ENCODE measurements at regions of chr17 and their contacts with region 1.

Region 1: GRCh38 chr17:18038861-18039534 is at the starts of genes ATPAF2 and GID4:
- DNase-seq: peak; percentile 99 to 100
- ATAC-seq: peak; percentile 96 to 99 (median 98)
- H3K4me3 ChIP-seq: peak within 1 kb of the TSS; percentile 65 to 98 (median 86)
- H3K27ac ChIP-seq: peak within 1 kb of the TSS; percentile 12 to 89 (median 85)
- H3K4me1 ChIP-seq: peaks cover 9 to 60% (median 50%) of the 10 kb centered on the region in 9 donors
- H3K27me3 ChIP-seq: no peaks in the 10 kb centered on the region
- CTCF ChIP-seq: peak in 3 of 9 donors; percentile 10 to 28 (median 22)
- total RNA-seq, gene ATPAF2: 32.6 to 43.5 (median 37.4) TPM
- total RNA-seq, gene GID4: 14.6 to 23.7 (median 17.3) TPM

Region 2: GRCh38 chr17:17812211-17813057 is 226.6 kb before region 1 on chr17:
- intact Hi-C with region 1: loop called in 5 of 10 experiments (anchors 10 kb)
- DNase-seq: peak; percentile 77 to 82
- ATAC-seq: peak; percentile 11 to 65 (median 42)
- H3K4me3 ChIP-seq: no peak overlapping the region
- H3K27ac ChIP-seq: peak overlapping the region in 7 of 10 donors; percentile 8 to 56 (median 44)
- H3K4me1 ChIP-seq: peaks cover 14 to 91% (median 52%) of the 10 kb centered on the region in 9 donors
- H3K27me3 ChIP-seq: no peaks in the 10 kb centered on the region
- CTCF ChIP-seq: peak; percentile 99 to 100 (median 100)

Region 3: DNA sequence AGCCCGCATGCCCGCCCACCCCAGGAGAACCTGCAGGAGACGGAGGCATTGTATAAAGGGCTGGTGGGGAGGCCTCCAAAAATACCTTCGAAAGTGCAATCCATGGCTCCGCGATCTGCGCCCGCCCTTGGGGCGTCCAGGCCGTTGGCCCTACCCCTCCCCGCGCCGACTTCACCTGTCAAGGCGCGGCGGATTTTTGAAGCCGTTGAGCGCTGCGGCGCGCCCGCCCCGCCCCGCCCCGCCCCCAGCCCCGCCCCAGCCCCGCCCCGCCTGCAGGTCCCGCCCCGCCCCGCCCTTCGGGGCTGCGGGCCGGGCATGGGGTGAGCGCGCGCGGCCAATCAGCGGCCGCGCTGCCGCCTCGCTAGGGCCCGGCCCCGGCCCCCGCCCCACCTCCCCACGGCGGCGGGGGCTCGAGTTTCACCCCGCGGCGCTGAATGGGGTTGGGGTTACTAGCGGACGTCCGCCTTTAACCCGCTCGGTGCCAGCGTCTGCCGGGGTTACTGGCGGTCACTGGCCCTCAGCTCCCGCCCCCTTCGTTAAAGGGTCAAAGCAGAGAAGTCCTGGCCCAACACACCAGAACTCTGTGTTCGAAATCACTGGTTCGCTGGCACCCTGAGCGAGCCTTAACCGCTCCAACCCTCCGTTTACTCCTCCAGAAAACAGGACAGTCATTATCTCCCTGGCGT is 215.4 kb before region 1 on chr17:
- intact Hi-C with region 1: loop called in 7 of 10 experiments (anchors 10 kb)
- DNase-seq: peak; percentile 83 to 88
- ATAC-seq: peak; percentile 86 to 94 (median 90)
- H3K4me3 ChIP-seq: peak overlapping the region; percentile 1 to 67 (median 54)
- H3K27ac ChIP-seq: peak overlapping the region; percentile 57 to 92 (median 83)
- H3K4me1 ChIP-seq: peaks cover 29 to 78% (median 69%) of the 10 kb centered on the region in 9 donors
- H3K27me3 ChIP-seq: no peaks in the 10 kb centered on the region
- CTCF ChIP-seq: no peak

Region 4: GRCh38 chr17:17877529-17878358 is 161.3 kb before region 1 on chr17:
- intact Hi-C with region 1: loop called in 3 of 10 experiments (anchors 10 kb)
- DNase-seq: peak; percentile 81 to 88
- ATAC-seq: peak; percentile 79 to 90 (median 85)
- H3K4me3 ChIP-seq: peak overlapping the region in 3 of 10 donors; percentile 3 to 10 (median 5)
- H3K27ac ChIP-seq: peak overlapping the region; percentile 82 to 97 (median 90)
- H3K4me1 ChIP-seq: peaks cover 27 to 79% (median 54%) of the 10 kb centered on the region in 9 donors
- H3K27me3 ChIP-seq: no peaks in the 10 kb centered on the region
- CTCF ChIP-seq: peak in 4 of 9 donors; percentile 6 to 45 (median 28)

Region 5: GRCh38 chr17:17890773-17891759 is 147.9 kb before region 1 on chr17:
- intact Hi-C with region 1: loop called in 8 of 10 experiments (anchors 5 to 10 kb)
- DNase-seq: peak; percentile 38 to 42
- ATAC-seq: peak; percentile 49 to 76 (median 66)
- H3K4me3 ChIP-seq: no peak overlapping the region
- H3K27ac ChIP-seq: peak overlapping the region in 1 of 10 donors; percentile 12
- H3K4me1 ChIP-seq: peaks cover 4 to 43% (median 27%) of the 10 kb centered on the region in 9 donors
- H3K27me3 ChIP-seq: no peaks in the 10 kb centered on the region
- CTCF ChIP-seq: peak; percentile 36 to 75 (median 66)

Region 6: GRCh38 chr17:17994271-17995069 is 44.5 kb before region 1 on chr17:
- intact Hi-C with region 1: loop called in 4 of 10 experiments (anchors 5 kb)
- DNase-seq: peak; percentile 17 to 37
- ATAC-seq: peak; percentile 34 to 85 (median 78)
- H3K4me3 ChIP-seq: no peak overlapping the region
- H3K27ac ChIP-seq: no peak overlapping the region
- H3K4me1 ChIP-seq: peaks cover 0 to 9% (median 0%) of the 10 kb centered on the region in 9 donors
- H3K27me3 ChIP-seq: no peaks in the 10 kb centered on the region
- CTCF ChIP-seq: peak in 8 of 9 donors; percentile 15 to 63 (median 54)

Region 7: GRCh38 chr17:18064053-18064452 is 25.1 kb after region 1 on chr17:
- intact Hi-C with region 1: no loop called
- DNase-seq: no peak
- ATAC-seq: peak in 2 of 8 donors; percentile 60 to 67
- H3K4me3 ChIP-seq: no peak overlapping the region
- H3K27ac ChIP-seq: no peak overlapping the region
- H3K4me1 ChIP-seq: no peaks in the 10 kb centered on the region
- H3K27me3 ChIP-seq: no peaks in the 10 kb centered on the region
- CTCF ChIP-seq: no peak

Region 8: DNA sequence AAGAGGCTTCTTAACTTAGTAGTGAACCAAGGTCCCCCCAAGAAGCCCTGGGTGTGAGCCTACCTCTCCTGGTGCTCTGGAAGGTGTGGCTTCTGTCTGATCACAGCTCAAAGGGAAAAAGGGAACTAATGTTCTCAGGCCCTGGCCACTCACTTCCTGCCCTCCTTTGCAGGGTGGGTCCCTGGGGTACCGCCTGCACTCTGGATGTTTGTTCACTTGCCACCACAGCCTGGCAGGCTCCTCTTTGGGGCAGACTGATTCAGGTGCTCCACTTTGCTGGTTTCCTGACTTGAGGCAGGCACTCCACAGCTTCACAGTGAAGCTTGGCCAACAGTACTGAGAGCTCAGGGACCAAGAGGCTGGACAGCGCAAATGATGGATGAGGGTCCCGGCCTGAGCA is 63.6 kb after region 1 on chr17:
- intact Hi-C with region 1: no loop called
- DNase-seq: no peak
- ATAC-seq: no peak
- H3K4me3 ChIP-seq: no peak overlapping the region
- H3K27ac ChIP-seq: no peak overlapping the region
- H3K4me1 ChIP-seq: no peaks in the 10 kb centered on the region
- H3K27me3 ChIP-seq: no peaks in the 10 kb centered on the region
- CTCF ChIP-seq: no peak